Cardiac septum (tissue), 1 donor: ENCODE measurements at regions of chr2 and their contacts with region 1.

Region 1: DNA sequence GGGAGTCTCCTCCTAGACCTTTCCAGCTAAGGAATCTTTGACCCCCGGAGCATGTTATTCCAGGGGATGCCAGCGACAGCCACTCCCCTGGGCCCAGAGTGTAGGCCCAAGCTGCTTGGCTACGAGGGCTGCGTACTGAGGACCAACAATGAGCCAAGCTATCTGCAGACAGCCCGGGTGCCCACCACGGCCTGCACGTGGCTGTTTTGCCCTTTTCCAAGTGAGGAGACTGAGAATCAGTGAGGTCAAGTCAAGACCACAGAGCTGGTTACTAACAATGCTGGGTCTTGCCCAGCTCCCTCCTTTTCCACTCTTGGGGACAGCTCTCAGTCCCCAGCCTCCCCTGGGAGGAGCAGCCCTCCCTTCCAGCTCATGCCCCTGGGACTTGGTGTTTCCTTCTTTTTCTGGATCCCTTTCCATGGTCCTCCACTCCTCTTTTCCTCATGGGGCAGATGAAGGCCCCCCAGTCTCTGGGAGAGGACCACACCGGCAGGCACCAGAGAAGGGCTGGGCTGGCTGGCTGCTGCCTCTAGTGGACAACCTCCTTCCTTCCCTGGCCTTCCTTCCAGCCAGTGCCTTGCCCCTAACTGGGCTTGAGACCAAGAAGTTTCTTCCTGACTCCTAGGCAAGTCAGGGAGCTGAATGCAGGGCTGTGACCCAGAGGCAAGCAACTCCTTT is 550 bp upstream of the MALL start:
- DNase-seq: peak; percentile 80

Region 2: DNA sequence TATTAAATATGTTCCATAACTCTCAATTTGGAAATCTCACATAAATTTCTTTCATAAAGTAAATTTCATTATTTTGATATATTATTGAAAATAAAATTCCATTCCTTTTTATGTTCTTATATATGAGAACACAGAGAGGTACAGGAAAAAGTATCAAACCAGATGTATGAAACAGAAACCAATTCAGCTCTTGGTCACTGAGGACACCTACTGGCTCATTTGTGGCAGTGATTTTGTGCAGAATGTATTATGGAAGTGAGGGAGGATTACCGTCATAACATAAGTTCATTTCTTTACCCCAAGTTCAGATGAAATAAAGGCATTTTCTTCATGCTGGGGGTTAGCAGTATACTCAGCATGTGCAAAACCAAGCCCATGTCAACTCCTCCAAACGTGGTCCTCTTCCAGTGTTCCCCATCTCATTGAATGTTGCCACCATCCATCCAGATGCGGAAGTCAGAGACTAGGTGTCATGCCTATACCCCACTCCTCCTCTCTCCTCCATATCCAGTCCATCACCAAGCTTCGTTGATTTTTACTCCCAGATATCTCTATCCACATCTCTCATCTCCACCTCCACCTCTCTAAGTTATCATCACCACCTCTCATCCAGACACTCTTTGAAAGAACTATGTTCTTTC is 41.1 kb after region 1 on chr2:
- intact Hi-C with region 1: loop called (anchors 1 kb)
- DNase-seq: no peak